ENCODE measurements at regions of chr18 and their contacts with region 1.

Region 1: GRCh38 chr18:12391618-12392165 is 14.7 kb upstream of the AFG3L2 start:
- DNase-seq: peak in 9 of 10 donors; percentile 42 to 72 (median 66)
- H3K4me3 ChIP-seq: peak overlapping the region in 1 of 59 donors; percentile 5
- H3K27ac ChIP-seq: peak overlapping the region in 14 of 59 donors; percentile 7 to 77 (median 46)
- H3K27me3 ChIP-seq: no peaks in the 10 kb centered on the region
- CTCF ChIP-seq: peak in 55 of 56 donors; percentile 62 to 99 (median 89)

Region 2: GRCh38 chr18:12460874-12461273 is 69.2 kb after region 1 on chr18:
- intact Hi-C with region 1: loop called (anchors 5 kb)
- DNase-seq: no peak
- H3K4me3 ChIP-seq: no peak overlapping the region
- H3K27ac ChIP-seq: peak overlapping the region in 45 of 59 donors; percentile 3 to 79 (median 55)
- H3K27me3 ChIP-seq: no peaks in the 10 kb centered on the region
- CTCF ChIP-seq: no peak

Region 3: DNA sequence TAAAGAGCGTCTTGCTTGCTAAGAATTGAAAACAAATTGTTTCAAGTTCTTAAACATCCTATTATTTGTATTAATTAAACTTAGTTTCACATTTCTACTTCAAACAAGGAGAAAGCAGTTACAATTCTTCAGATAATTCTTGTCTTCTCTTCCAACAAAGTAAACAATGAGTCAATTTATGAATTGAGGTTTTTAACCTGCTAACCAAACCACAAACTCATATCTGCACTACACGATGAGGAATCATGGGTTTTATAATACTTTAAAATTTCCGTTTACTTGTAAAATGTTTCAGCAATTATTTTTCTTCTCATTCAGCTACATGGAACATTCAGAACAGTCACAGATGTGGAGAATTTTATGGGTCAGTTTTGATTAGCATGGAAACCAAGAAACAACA is 152.0 kb after region 1 on chr18:
- intact Hi-C with region 1: loop called in 1 of 2 experiments (anchors 10 kb)
- DNase-seq: no peak
- H3K4me3 ChIP-seq: no peak overlapping the region
- H3K27ac ChIP-seq: no peak overlapping the region
- H3K27me3 ChIP-seq: no peaks in the 10 kb centered on the region
- CTCF ChIP-seq: no peak